ENCODE measurements at regions of chr22 and their contacts with region 1.

Region 1: GRCh38 chr22:35914665-35915476 is 113.8 kb downstream of the RBFOX2 start:
- DNase-seq: no peak
- ATAC-seq: peak; percentile 90

Region 2: GRCh38 chr22:35430897-35431322 is 484.0 kb before region 1 on chr22:
- intact Hi-C with region 1: loop called (anchors 5 kb)
- DNase-seq: peak; percentile 93
- ATAC-seq: peak; percentile 97

Region 3: DNA sequence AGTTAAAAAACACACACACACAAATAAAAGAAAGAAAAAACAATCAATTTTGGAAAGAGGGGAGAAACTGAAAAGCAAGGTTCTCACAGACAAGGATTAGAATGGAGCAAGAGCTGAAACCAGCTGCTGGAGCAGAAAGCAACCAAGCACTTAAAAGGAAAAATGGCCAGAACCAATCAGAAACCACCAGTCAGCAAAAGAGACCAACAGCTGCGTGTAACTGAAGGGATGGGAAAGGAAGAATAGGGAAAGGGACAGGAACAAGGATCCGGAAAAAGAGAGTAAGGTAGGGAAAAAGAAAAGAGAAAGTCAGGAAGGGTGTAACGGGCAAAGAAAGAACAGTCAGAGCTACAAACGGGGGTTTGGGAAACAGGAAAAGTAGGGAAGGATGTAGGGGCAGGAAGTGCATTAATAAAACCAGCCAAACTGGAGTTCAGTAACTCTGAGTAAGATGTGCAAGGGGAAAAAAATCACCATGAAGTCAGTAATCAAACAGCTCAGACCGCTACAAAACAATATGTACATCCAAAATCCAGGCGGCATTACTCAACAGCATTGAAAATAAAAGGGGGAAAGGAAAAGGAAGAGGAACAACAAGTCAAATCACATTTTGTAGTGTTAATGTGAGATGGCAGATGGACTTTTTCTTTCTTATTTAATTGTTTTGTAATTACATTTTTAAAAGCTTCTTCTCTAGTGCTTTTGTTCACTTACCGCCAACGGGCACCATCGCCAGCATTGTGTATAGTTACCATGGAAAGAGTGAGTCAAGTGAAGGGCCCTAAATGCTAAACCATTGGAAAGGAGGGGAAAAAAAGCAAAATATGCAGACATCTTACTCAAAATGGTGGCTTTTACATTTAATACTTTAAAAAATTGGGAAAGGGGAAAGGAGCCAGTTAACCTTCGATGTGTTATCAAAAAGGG is 148.0 kb before region 1 on chr22:
- intact Hi-C with region 1: loop called (anchors 5 kb)
- DNase-seq: no peak
- ATAC-seq: peak; percentile 60

Region 4: DNA sequence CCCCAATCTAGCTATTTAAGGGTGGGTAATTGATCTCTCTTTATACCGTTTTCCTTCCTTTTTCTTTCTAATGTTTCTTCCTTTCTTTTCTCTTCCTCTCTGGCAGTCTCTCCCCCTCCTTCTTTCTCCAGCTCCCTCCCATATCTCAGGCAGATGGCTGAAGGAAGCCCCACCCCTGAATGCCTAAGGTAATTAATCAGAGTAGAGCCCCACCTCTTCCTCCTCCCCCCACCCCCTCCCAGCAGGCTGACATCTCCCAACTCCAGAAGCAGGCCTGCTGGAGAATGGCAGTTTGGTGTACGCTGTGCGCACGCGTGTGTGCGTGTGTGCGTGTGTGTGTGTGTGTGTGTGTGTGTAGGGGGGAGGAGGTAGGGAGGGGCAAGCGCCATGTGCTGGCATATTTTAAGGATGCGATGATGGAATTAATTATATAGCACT is 74.5 kb before region 1 on chr22:
- intact Hi-C with region 1: loop called (anchors 1 kb)
- DNase-seq: peak; percentile 90
- ATAC-seq: peak; percentile 81

Region 5: DNA sequence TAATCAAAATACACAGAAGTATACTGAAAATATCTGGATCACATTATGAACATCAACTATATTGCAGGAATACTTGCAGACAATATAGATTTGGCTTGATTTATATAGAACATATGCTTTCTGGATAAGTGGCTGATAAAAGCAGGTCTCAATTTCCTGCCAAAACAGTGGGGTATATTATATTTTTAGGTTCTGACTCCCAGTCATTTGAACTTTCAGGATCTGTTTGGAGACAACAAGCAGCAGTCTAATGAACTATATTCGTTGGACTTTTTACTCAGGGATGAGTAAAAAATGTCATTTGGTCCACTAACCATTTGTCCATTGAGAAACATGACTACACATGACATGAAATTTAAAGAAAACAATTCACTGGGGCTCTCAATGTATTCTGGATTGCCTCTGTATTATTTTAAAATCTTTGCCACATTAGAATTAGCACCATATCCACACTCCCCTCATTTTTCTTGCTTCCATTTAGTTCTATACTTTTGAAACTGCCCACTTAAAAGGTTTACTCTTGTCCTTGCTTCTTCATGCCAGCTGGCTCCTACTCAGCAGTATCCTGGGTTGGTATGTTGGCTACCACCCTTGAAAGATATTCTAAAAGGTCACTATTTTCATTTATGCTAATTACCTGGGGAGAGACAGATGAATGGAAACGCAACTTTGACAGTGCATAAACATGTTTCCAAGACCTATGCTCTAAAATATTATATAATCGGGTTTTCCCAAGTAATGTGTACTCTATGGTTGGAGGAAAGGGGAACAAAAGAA is 44.2 kb before region 1 on chr22:
- intact Hi-C with region 1: loop called (anchors 5 kb)
- DNase-seq: no peak
- ATAC-seq: no peak

Region 6: GRCh38 chr22:35894937-35895708 is 19.7 kb before region 1 on chr22:
- intact Hi-C with region 1: loop called (anchors 2 kb)
- DNase-seq: no peak
- ATAC-seq: peak; percentile 96